Naive thymus-derived CD8-positive, alpha-beta T cell (primary cell): ENCODE measurements at regions of chr1 and their contacts with region 1.

Region 1: GRCh38 chr1:116987256-116987555 is 14.4 kb upstream of the CD101 start:
- DNase-seq: peak; percentile 50 to 85 (median 76)
- ATAC-seq: peak; percentile 95 to 96
- H3K4me3 Mint-ChIP-seq: peak overlapping the region; percentile 79 to 89 (median 83)
- H3K27ac Mint-ChIP-seq: peak overlapping the region; percentile 93 to 99 (median 98)
- H3K4me1 Mint-ChIP-seq: peaks cover 32 to 77% (median 62%) of the 10 kb centered on the region in 4 donors
- H3K27me3 Mint-ChIP-seq: no peaks in the 10 kb centered on the region

Region 2: GRCh38 chr1:116737020-116737854 is 250.0 kb before region 1 on chr1:
- POLR2A ChIA-PET with region 1: interaction called, 12 read pairs
- DNase-seq: peak; percentile 46 to 87 (median 78)
- ATAC-seq: peak; percentile 57 to 62
- H3K4me3 Mint-ChIP-seq: peak overlapping the region; percentile 63 to 82 (median 76)
- H3K27ac Mint-ChIP-seq: peak overlapping the region; percentile 94 to 99 (median 98)
- H3K4me1 Mint-ChIP-seq: peaks cover 33 to 48% (median 45%) of the 10 kb centered on the region in 4 donors
- H3K27me3 Mint-ChIP-seq: no peaks in the 10 kb centered on the region

Region 3: GRCh38 chr1:116763787-116764465 is 223.3 kb before region 1 on chr1:
- POLR2A ChIA-PET with region 1: interaction called, 14 read pairs
- DNase-seq: peak in 4 of 10 donors; percentile 27 to 38 (median 32)
- ATAC-seq: peak; percentile 6 to 15
- H3K4me3 Mint-ChIP-seq: peak overlapping the region; percentile 68 to 91 (median 88)
- H3K27ac Mint-ChIP-seq: peak overlapping the region; percentile 97 to 99 (median 98)
- H3K4me1 Mint-ChIP-seq: peaks cover 58 to 98% (median 96%) of the 10 kb centered on the region in 4 donors
- H3K27me3 Mint-ChIP-seq: no peaks in the 10 kb centered on the region

Region 4: DNA sequence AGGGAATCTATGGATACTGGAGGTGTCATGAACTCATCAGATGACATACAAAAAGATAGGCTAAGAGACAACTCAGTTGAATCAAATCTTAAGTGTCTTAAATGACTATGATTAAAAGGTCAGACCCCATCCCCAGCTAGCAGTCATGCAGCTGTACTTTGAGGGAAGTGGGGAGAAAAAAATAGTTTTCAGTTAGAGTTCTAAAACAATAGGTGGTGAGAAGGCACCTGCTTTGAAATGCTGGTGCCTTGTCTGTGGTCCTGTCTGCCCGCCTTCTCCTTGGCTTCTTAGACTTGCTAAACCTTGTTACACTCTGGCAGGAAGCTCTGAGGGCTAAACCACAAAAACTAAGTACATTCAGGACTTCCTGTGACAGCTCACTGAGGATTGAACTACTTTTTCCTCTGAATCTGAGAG is 217.6 kb before region 1 on chr1:
- POLR2A ChIA-PET with region 1: interaction called, 14 read pairs
- DNase-seq: peak; percentile 29 to 91 (median 78)
- ATAC-seq: peak; percentile 85 to 91
- H3K4me3 Mint-ChIP-seq: peak overlapping the region; percentile 34 to 82 (median 74)
- H3K27ac Mint-ChIP-seq: peak overlapping the region; percentile 93 to 99 (median 98)
- H3K4me1 Mint-ChIP-seq: peaks cover 47 to 85% (median 84%) of the 10 kb centered on the region in 4 donors
- H3K27me3 Mint-ChIP-seq: no peaks in the 10 kb centered on the region

Region 5: GRCh38 chr1:117009132-117009531 is 21.9 kb after region 1 on chr1:
- POLR2A ChIA-PET with region 1: interaction called, 11 read pairs
- DNase-seq: peak in 5 of 10 donors; percentile 22 to 66 (median 49)
- ATAC-seq: peak; percentile 44 to 59
- H3K4me3 Mint-ChIP-seq: peak overlapping the region; percentile 62 to 83 (median 74)
- H3K27ac Mint-ChIP-seq: peak overlapping the region; percentile 85 to 100 (median 96)
- H3K4me1 Mint-ChIP-seq: peaks cover 36 to 84% (median 71%) of the 10 kb centered on the region in 4 donors
- H3K27me3 Mint-ChIP-seq: no peaks in the 10 kb centered on the region

Region 6: DNA sequence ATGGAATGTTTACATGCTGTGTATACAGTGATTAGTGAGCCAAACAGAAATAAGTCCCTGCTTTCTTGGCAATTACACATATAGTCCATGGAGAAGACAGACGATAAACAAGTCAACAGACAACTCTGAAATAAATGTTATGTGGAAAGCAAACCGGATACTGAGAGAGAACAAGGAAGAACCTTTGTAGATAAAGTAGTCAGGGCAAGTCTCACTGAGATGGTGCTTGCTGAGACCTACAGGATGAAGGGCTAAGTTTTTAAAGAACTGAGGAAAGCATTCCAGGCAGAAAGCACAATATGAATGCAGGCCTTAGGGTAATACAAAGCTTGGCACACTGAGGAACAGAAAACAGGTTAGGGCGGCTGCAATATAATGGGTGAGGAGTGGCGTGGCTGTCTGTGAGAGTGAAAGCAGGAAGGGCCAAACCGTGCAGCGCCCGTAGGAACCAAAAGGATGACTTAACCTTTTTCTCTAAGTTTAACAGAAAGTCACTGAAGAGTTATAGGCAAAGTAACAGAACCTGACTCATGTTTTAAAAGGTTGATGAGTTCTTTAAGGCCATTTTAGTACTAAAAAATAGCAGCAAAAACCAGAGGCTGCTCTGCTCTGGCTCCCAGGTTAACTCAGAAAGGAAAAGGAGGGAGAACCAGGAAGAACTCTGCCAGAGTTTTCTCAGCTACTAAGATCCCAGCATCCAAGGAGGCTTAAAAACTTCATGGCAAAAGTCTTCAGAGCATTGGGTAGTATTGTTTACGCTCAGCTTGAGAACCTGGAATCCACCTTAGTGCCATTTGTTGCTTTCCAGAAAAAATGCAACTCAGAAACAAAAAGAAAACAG is 64.2 kb after region 1 on chr1:
- POLR2A ChIA-PET with region 1: interaction called, 10 read pairs
- DNase-seq: peak in 5 of 10 donors; percentile 3 to 37 (median 20)
- ATAC-seq: peak in 1 of 2 donors; percentile 29
- H3K4me3 Mint-ChIP-seq: peak overlapping the region; percentile 65 to 91 (median 84)
- H3K27ac Mint-ChIP-seq: peak overlapping the region; percentile 82 to 99 (median 95)
- H3K4me1 Mint-ChIP-seq: peaks cover 32 to 75% (median 66%) of the 10 kb centered on the region in 4 donors
- H3K27me3 Mint-ChIP-seq: no peaks in the 10 kb centered on the region

Region 7: GRCh38 chr1:117059678-117060440 is 72.7 kb after region 1 on chr1 and contains the start of gene TTF2:
- POLR2A ChIA-PET with region 1: interaction called, 16 read pairs
- DNase-seq: peak; percentile 87 to 99 (median 98)
- ATAC-seq: peak; percentile 90 to 91
- H3K4me3 Mint-ChIP-seq: no peak within 1 kb of the TSS
- H3K27ac Mint-ChIP-seq: peak within 1 kb of the TSS in 4 of 10 donors; percentile 19 to 86 (median 62)
- H3K4me1 Mint-ChIP-seq: peaks cover 9 to 48% (median 27%) of the 10 kb centered on the region in 4 donors
- H3K27me3 Mint-ChIP-seq: no peaks in the 10 kb centered on the region
- polyA plus RNA-seq, gene TTF2: 10.8 to 13.4 (median 11.7) TPM